ENCODE measurements at regions of chr5 and their contacts with region 1.

Region 1: GRCh38 chr5:141040771-141041426 is 10.3 kb upstream of the PCDHB1 start:
- DNase-seq: peak; percentile 98
- H3K4me3 Mint-ChIP-seq: no peak overlapping the region
- H3K27ac Mint-ChIP-seq: no peak overlapping the region
- H3K4me1 Mint-ChIP-seq: no peaks in the 10 kb centered on the region
- H3K27me3 Mint-ChIP-seq: peaks cover 31% of the 10 kb centered on the region
- CTCF ChIP-seq: peak; percentile 89

Region 2: GRCh38 chr5:140718241-140718580 is 322.7 kb before region 1 on chr5:
- CTCF ChIA-PET with region 1: no interaction called
- POLR2A ChIA-PET with region 1: interaction called, 26 read pairs
- intact Hi-C with region 1: no loop called
- DNase-seq: no peak
- H3K4me3 Mint-ChIP-seq: peak overlapping the region; percentile 73
- H3K27ac Mint-ChIP-seq: peak overlapping the region; percentile 86
- H3K4me1 Mint-ChIP-seq: peaks cover 24% of the 10 kb centered on the region
- H3K27me3 Mint-ChIP-seq: no peaks in the 10 kb centered on the region
- CTCF ChIP-seq: no peak

Region 3: DNA sequence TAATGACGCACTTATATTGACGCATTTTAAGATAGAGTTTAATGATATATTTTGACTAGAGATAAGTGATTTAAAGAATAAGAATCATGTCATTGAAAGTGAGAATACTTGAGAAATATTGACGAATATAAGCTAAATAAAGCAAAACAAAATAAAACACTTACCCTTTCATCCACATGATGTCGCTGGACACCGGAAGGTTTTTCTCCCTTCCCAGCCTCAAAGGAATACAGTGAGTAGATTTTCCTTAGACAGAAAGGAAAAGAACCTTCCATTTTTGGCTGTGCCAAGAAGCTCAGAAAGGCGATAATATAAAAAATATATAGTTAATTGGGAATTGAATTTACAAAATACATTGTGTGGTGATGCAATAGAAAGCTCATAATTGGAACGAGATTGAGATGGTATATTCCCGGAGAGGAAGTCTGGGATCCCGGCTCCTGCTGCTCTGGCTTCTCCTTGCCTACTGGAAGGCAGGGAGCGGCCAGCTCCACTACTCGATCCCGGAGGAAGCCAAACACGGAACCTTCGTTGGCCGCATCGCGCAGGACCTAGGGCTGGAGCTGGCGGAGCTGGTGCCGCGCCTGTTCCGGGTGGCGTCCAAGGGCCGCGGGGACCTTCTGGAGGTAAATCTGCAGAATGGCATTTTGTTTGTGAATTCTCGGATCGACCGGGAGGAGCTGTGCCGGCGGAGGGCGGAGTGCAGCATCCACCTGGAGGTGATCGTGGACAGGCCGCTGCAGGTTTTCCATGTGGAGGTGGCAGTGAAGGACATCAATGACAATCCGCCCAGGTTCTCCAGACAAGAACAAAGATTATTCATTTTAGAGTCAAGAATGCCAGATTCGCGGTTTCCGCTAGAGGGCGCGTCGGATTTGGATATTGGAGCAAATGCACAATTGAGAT is 219.3 kb before region 1 on chr5 and contains the start of gene PCDHA5:
- CTCF ChIA-PET with region 1: interaction called, 27 read pairs
- POLR2A ChIA-PET with region 1: interaction called, 19 read pairs
- intact Hi-C with region 1: no loop called
- DNase-seq: peak; percentile 17
- H3K4me3 Mint-ChIP-seq: no peak within 1 kb of the TSS
- H3K27ac Mint-ChIP-seq: no peak within 1 kb of the TSS
- H3K4me1 Mint-ChIP-seq: no peaks in the 10 kb centered on the region
- H3K27me3 Mint-ChIP-seq: peaks cover 2% of the 10 kb centered on the region
- CTCF ChIP-seq: peak; percentile 19
- total RNA-seq, gene PCDHA5: 0.12 and 0.22 TPM in 2 replicates

Region 4: GRCh38 chr5:140868721-140869554 is 172.0 kb before region 1 on chr5 and contains the start of gene PCDHA11:
- CTCF ChIA-PET with region 1: interaction called, 121 read pairs
- POLR2A ChIA-PET with region 1: interaction called, 179 read pairs
- intact Hi-C with region 1: loop called (anchors 1 kb)
- DNase-seq: peak; percentile 14
- H3K4me3 Mint-ChIP-seq: no peak within 1 kb of the TSS
- H3K27ac Mint-ChIP-seq: no peak within 1 kb of the TSS
- H3K4me1 Mint-ChIP-seq: peaks cover 4% of the 10 kb centered on the region
- H3K27me3 Mint-ChIP-seq: no peaks in the 10 kb centered on the region
- CTCF ChIP-seq: peak; percentile 47
- total RNA-seq, gene PCDHA11: 0.27 and 0.49 TPM in 2 replicates

Region 5: DNA sequence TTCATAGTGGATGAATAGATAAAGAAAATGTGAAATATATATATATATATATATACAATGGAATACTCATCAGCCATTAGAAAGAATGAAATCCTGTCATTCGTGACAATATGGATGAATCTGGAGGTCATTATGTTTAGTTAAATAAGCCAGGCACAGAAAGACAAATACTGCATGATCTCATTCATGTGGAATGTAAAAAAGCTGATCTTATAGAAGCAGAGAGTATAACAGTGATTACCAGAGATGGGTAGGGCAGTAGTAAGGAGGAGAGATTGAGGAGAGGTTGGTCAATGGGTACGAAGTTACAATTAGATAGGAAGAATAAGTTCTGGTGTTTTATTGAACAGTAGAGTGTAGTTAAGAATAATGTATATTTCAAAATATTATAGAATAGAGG is 94.3 kb before region 1 on chr5:
- CTCF ChIA-PET with region 1: interaction called, 6 read pairs
- POLR2A ChIA-PET with region 1: interaction called, 35 read pairs
- intact Hi-C with region 1: no loop called
- DNase-seq: no peak
- H3K4me3 Mint-ChIP-seq: no peak overlapping the region
- H3K27ac Mint-ChIP-seq: no peak overlapping the region
- H3K4me1 Mint-ChIP-seq: peaks cover 20% of the 10 kb centered on the region
- H3K27me3 Mint-ChIP-seq: no peaks in the 10 kb centered on the region
- CTCF ChIP-seq: no peak

Region 6: DNA sequence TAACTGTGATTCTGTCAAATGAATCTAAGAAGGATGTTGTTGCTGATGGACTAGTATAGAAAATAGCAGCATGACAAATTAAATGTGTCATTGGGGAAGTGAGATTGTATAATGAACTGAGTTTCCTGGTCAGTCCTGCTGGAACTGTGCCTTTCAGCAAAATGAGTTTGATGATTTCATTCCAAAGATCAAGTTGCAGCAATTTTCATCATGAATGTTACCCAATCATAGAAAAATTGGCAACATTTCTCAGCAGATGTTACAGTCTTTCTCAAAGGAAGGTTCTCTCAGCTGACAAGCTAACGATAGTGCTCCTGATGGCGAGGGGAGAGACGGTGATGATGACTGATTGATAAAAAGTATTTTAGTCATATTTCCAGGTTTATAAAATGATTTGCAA is 63.9 kb before region 1 on chr5:
- CTCF ChIA-PET with region 1: interaction called, 7 read pairs
- POLR2A ChIA-PET with region 1: interaction called, 41 read pairs
- intact Hi-C with region 1: loop called (anchors 1 kb)
- DNase-seq: peak; percentile 86
- H3K4me3 Mint-ChIP-seq: peak overlapping the region; percentile 32
- H3K27ac Mint-ChIP-seq: peak overlapping the region; percentile 94
- H3K4me1 Mint-ChIP-seq: peaks cover 37% of the 10 kb centered on the region
- H3K27me3 Mint-ChIP-seq: no peaks in the 10 kb centered on the region
- CTCF ChIP-seq: no peak

Region 7: GRCh38 chr5:141094481-141095262 is 53.8 kb after region 1 on chr5 and contains the start of gene PCDHB2:
- CTCF ChIA-PET with region 1: no interaction called
- POLR2A ChIA-PET with region 1: no interaction called
- intact Hi-C with region 1: no loop called
- DNase-seq: peak; percentile 70
- H3K4me3 Mint-ChIP-seq: peak within 1 kb of the TSS; percentile 74
- H3K27ac Mint-ChIP-seq: peak within 1 kb of the TSS; percentile 89
- H3K4me1 Mint-ChIP-seq: no peaks in the 10 kb centered on the region
- H3K27me3 Mint-ChIP-seq: no peaks in the 10 kb centered on the region
- CTCF ChIP-seq: peak; percentile 58
- total RNA-seq, gene PCDHB2: 2.4 and 2.6 TPM in 2 replicates

Region 8: DNA sequence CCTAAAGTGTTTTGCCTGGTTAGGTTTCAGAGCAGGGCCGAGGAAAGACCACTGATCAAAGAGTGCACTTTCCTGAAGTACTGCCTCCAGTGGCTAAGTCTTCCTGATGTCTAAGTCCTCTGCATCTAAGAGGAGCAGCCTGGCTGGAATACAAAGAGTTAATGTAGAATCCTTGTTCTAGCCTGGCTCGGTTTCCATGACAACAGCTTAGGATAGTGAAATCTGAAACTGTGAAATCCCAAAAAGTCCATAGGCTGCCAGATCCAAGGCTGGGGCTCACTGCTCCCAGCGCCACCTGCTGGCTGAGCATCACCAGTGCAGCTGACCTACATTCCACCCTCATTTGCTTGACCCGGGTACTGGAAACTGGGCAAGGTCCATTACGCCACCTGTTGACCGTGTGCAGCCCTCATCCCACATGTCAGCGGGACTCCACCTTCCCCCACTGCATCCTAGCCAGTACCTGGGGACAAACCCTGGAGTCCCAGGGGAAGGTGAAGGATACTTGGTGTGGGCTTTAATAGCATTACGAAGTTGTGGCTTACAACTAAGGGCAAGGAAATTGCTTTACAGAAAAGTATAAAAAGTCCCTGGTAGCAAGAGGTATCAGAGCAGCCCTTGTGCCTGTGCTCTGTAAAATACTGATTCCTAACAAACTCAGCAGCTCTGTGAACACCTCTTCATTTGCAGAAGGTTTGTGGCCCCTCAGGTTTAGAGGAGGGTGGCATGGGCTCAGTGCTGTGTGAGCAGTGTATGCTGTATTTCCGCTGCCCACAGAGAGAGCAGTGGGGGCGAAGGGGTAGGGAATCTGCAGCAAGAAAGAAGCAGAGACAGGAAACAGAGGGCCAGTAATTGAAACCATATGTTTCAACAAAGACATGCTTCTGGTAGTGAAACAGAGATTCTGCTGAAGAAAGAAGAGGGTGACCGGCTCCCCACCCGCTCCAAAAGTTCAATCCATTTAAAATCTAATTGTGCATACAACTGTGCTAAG is 484.0 kb after region 1 on chr5:
- CTCF ChIA-PET with region 1: no interaction called
- POLR2A ChIA-PET with region 1: interaction called, 3 read pairs
- intact Hi-C with region 1: loop called (anchors 5 kb)
- DNase-seq: peak; percentile 97
- H3K4me3 Mint-ChIP-seq: no peak overlapping the region
- H3K27ac Mint-ChIP-seq: peak overlapping the region; percentile 60
- H3K4me1 Mint-ChIP-seq: peaks cover 45% of the 10 kb centered on the region
- H3K27me3 Mint-ChIP-seq: no peaks in the 10 kb centered on the region
- CTCF ChIP-seq: peak; percentile 100